ENCODE measurements at regions of chr21 and their contacts with region 1.

Region 1: DNA sequence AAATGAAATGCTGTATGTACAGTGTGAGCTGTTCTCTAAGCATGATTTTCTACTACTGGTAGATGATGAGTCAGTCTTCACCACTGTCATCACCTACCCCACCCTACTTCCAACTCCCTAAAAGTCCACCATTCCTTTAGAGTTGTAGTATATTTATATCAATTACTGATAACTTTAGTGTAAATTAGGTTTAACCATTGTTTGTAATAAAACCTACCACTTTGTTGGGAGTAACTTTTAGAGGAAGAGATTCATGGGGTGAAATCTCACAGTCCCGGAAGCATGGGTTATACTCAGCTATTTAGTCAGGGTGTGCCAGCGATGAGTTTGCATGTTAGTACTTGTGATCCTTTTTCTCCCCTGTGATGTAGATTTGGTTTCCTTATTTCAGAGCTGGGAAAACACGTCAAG is 17.1 kb downstream of the MORC3 start:
- DNase-seq: peak; percentile 31 to 73
- ATAC-seq: peak; percentile 96 to 97
- H3K4me3 ChIP-seq: no peak overlapping the region
- H3K27ac ChIP-seq: peak overlapping the region; percentile 70 to 76
- H3K4me1 ChIP-seq: peaks cover 20% of the 10 kb centered on the region
- CTCF ChIP-seq: no peak
- EP300 ChIP-seq: no peak
- POLR2A ChIP-seq: no peak
- RAD21 ChIP-seq: no peak

Region 2: DNA sequence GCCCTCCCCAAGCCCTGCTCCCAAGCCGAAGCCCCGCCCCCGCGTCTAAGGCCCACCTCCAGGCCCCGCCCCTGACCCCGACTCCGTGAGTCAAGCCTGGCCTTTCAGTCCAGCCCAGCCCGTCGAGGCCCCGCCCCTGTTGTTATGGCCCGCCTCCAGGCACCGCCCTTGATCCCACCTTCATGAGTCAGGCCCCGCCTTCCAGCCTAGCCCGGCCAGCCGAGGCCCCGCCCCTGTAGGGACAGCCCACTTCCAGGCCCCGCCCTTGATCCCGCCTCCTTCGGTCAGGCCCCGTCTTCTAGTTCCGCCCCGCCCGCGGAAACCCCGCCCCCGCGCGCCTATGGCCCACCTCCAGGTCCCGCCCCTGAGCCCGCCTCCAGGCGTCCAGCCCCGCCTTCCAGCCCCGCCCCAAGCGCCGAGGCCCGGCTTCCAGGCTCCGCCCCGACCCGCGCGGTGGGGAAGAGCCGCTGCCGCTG is 180.7 kb before region 1 on chr21:
- CTCF ChIA-PET with region 1: no interaction called
- POLR2A ChIA-PET with region 1: no interaction called
- DNase-seq: peak; percentile 73 to 98
- ATAC-seq: peak; percentile 89 to 95
- H3K4me3 ChIP-seq: peak overlapping the region; percentile 71
- H3K27ac ChIP-seq: peak overlapping the region in 1 of 2 experiments; percentile 88; a peak in 3 of 6 replicates
- H3K4me1 ChIP-seq: peaks cover 9% of the 10 kb centered on the region; the same call in 1 of the 3 replicates
- CTCF ChIP-seq: no peak
- EP300 ChIP-seq: no peak
- POLR2A ChIP-seq: no peak
- RAD21 ChIP-seq: no peak

Region 3: DNA sequence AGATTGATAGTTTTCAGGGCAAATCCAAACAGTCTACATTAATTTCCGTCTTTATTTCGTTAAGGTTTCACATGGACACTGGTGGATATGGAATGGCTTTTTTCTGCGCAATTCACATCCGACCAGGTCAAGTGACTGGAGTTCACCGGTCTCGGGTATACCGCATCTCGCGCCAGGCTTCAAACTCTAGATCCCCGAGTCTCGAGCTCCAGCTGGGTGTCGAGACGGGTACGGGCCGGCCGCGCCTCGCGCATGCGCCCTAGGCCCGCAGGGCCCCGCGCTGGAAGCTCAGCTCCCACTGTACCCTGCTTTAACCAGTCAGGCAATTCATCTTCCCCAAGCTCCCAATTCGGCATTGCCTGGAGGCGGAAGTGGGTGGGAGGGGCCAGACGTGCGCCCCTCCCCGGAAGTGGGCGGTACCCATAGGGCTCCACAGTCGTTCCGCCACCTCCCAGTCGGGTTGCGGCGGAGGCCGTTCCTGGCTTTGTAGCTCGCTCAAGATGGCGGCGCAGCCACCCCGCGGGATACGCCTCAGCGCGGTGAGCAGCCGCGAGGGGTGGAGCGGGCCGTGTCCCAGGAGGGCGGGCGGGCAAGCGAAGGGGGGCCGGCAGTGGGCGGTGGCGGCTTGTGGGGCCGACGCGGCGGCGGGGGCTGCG is 17.2 kb before region 1 on chr21 and contains the start of gene MORC3:
- CTCF ChIA-PET with region 1: interaction called, 5 read pairs
- POLR2A ChIA-PET with region 1: interaction called, 21 read pairs
- DNase-seq: peak; percentile 91 to 97
- ATAC-seq: peak; percentile 95
- H3K4me3 ChIP-seq: peak within 1 kb of the TSS; percentile 88
- H3K27ac ChIP-seq: peak within 1 kb of the TSS; percentile 96 to 99
- H3K4me1 ChIP-seq: peaks cover 21% of the 10 kb centered on the region
- CTCF ChIP-seq: no peak
- EP300 ChIP-seq: no peak
- POLR2A ChIP-seq: peak; percentile 69
- RAD21 ChIP-seq: no peak
- polyA plus RNA-seq, gene MORC3: 15.0 and 21.5 TPM in 2 replicates

Region 4: GRCh38 chr21:36684957-36685714 is 348.0 kb after region 1 on chr21:
- CTCF ChIA-PET with region 1: no interaction called
- POLR2A ChIA-PET with region 1: no interaction called
- DNase-seq: no peak
- ATAC-seq: no peak
- H3K4me3 ChIP-seq: no peak overlapping the region
- H3K27ac ChIP-seq: no peak overlapping the region
- H3K4me1 ChIP-seq: no peaks in the 10 kb centered on the region
- CTCF ChIP-seq: no peak
- EP300 ChIP-seq: no peak
- POLR2A ChIP-seq: no peak
- RAD21 ChIP-seq: no peak

Measured in A549 (cell line).